Endothelial cell of umbilical vein (primary cell): ENCODE measurements at regions of chr11 and their contacts with region 1.

Region 1: GRCh38 chr11:114348200-114349191 is 51.8 kb downstream of the C11orf71 start:
- DNase-seq: peak; percentile 75
- H3K4me3 ChIP-seq: no peak overlapping the region
- H3K27ac ChIP-seq: no peak overlapping the region
- H3K4me1 ChIP-seq: no peaks in the 10 kb centered on the region
- H3K27me3 ChIP-seq: no peaks in the 10 kb centered on the region
- CTCF ChIP-seq: peak; percentile 35 to 39
- POLR2A ChIP-seq: no peak

Region 2: DNA sequence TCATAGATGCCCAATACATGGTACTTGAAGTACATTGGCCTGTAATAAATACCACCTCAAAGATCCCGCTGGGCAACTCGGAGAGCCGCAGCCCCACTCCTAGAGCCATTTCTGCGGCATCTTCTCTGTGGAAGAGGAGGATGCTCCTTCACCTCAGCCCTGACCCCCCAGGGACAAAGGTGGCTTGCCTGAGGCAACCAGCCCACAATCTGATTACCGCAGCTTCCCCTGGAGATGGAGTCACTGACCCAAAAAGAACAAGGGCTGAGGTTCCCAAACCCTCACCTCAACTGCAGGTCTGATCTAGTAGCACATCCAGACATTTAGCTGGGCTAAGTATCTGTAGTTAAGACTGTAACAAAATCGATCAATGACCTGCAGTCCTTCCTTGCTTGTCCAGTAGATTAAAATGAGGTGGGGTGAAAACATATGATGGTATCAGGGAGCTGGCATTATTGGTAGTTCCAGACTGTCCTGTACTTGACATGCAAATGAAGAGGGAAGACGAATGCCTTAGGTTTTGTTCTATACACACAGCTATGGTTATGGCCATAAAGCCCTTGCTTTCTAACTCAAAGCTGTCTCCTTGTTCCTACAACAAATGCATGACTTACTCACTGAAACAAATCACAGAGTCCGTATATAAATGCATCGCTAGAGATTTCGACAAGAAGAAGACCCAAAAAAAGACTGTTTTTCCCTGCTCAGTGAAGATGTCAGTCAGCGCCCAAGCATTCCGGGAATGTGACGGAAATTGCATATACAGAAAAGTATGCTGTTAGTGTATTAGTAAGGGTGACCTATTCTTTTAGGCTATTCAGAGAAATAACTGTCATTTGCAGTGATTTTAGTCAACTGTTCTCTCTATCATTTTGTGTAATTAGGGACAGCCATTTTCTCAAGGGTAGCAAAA is 18.1 kb after region 1 on chr11:
- CTCF ChIA-PET with region 1: interaction called, 10 read pairs
- POLR2A ChIA-PET with region 1: no interaction called
- dilution Hi-C with region 1: no loop called
- intact Hi-C with region 1: no loop called
- DNase-seq: peak; percentile 51
- H3K4me3 ChIP-seq: no peak overlapping the region
- H3K27ac ChIP-seq: peak overlapping the region; percentile 35
- H3K4me1 ChIP-seq: peaks cover 5% of the 10 kb centered on the region
- H3K27me3 ChIP-seq: no peaks in the 10 kb centered on the region
- CTCF ChIP-seq: no peak
- POLR2A ChIP-seq: no peak

Region 3: GRCh38 chr11:114439229-114440120 is 91.0 kb after region 1 on chr11 and contains the start of gene REXO2:
- CTCF ChIA-PET with region 1: interaction called, 4 read pairs
- POLR2A ChIA-PET with region 1: no interaction called
- dilution Hi-C with region 1: no loop called
- intact Hi-C with region 1: loop called (anchors 1 kb)
- DNase-seq: peak; percentile 96
- H3K4me3 ChIP-seq: peak within 1 kb of the TSS; percentile 49 to 97 (median 83)
- H3K27ac ChIP-seq: peak within 1 kb of the TSS; percentile 36
- H3K4me1 ChIP-seq: peaks cover 23% of the 10 kb centered on the region
- H3K27me3 ChIP-seq: no peaks in the 10 kb centered on the region
- CTCF ChIP-seq: peak in 1 of 2 donors; percentile 43
- POLR2A ChIP-seq: peak; percentile 83
- total RNA-seq, gene REXO2: 155 and 182 TPM in 2 replicates

Region 4: DNA sequence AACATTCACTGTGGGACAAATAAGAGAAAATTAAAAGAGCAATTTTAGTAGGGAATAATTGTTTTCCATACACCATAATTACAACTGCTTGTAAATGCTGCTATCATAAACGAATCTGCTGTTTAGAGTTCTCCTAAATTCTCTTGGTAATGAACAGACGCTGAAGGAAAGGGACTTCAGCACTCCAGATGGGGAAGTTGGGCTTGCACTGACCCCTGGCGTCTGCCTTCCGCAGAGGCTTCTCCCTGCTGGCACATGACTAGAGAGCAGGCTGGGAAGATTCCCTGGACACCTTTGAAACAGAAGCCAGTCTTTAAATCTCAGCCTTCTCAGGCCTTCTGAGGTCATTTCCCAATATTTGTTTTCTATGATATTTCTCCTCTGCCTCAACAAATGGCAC is 413.9 kb after region 1 on chr11:
- CTCF ChIA-PET with region 1: no interaction called
- POLR2A ChIA-PET with region 1: no interaction called
- dilution Hi-C with region 1: no loop called
- intact Hi-C with region 1: loop called (anchors 1 kb)
- DNase-seq: peak; percentile 47
- H3K4me3 ChIP-seq: no peak overlapping the region
- H3K27ac ChIP-seq: no peak overlapping the region
- H3K4me1 ChIP-seq: no peaks in the 10 kb centered on the region
- H3K27me3 ChIP-seq: no peaks in the 10 kb centered on the region
- CTCF ChIP-seq: peak; percentile 51 to 75
- POLR2A ChIP-seq: no peak